ENCODE measurements at regions of chr6 and their contacts with region 1.

Region 1: DNA sequence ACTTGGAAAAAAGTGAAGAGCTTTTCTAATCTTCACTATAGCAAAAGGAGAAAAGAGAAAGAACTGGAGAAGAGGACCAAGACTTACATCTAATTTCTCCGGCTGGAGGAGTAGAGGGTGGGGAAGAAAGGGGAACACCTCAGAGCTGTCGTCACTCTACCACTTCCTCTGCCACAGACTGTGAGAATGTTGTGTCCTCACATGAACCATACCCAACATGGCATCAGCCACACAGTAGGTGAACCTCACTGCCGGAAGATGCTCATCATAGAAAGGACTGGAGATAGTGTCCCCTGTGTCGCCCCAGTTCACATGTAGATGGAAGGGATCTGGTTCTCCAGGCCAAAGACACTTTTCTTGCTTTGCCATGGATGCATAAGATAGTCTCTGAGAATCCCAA is 604.4 kb upstream of the NOX3 start:
- DNase-seq: no peak
- H3K4me3 ChIP-seq: no peak overlapping the region
- H3K27ac ChIP-seq: no peak overlapping the region
- H3K4me1 ChIP-seq: no peaks in the 10 kb centered on the region
- H3K27me3 ChIP-seq: no peaks in the 10 kb centered on the region
- CTCF ChIP-seq: no peak
- EP300 ChIP-seq: no peak
- POLR2A ChIP-seq: no peak

Region 2: DNA sequence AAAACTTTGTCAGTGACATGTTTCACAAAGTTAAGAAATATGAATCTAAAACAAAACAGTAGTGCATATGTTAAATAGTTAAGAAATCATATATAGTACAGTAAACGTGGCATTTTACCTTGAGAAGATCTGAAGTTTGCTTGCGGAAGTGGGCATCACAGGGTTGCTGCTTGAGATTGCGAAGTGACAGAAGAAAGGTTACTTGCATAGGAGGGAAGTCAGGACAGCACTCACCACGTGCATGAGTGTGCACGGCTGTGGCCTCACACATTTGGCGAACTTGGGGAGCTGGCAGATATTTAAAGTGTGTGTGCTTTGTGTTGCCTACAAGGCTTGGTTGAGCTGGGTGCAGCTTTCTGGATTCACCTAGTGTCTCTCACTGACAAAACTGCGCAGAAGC is 285.7 kb after region 1 on chr6:
- in situ Hi-C with region 1: no loop called
- intact Hi-C with region 1: no loop called
- DNase-seq: no peak
- H3K4me3 ChIP-seq: no peak overlapping the region
- H3K27ac ChIP-seq: no peak overlapping the region
- H3K4me1 ChIP-seq: no peaks in the 10 kb centered on the region
- H3K27me3 ChIP-seq: no peaks in the 10 kb centered on the region
- CTCF ChIP-seq: no peak
- EP300 ChIP-seq: no peak
- POLR2A ChIP-seq: no peak

Region 3: GRCh38 chr6:157706883-157707282 is 1646.9 kb after region 1 on chr6:
- in situ Hi-C with region 1: no loop called
- intact Hi-C with region 1: loop called (anchors 5 kb)
- DNase-seq: no peak
- H3K4me3 ChIP-seq: no peak overlapping the region
- H3K27ac ChIP-seq: no peak overlapping the region
- H3K4me1 ChIP-seq: no peaks in the 10 kb centered on the region
- H3K27me3 ChIP-seq: no peaks in the 10 kb centered on the region
- CTCF ChIP-seq: no peak
- EP300 ChIP-seq: no peak
- POLR2A ChIP-seq: no peak